Posterior vena cava (tissue), 2 donors: ENCODE measurements at regions of chr5 and their contacts with region 1.

Region 1: DNA sequence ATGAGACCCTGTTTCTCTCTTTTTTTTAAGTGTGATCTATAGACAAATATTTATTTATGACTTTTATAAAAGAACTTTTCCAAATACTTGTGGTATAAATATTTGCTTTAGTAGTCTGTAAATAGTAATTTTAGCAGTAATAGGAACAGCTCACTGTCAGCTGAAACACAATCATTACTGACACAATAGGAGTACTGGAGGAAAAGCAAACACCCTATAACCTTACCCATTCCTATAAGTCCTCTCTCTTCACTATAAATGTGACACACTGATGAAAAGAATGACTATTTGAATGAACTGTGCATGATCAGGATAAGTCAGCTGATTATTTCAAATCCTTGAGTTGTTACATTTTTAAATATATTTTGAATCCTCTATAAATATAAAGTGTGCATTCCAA is 72.4 kb downstream of the CDH12 start:
- DNase-seq: no peak

Region 2: DNA sequence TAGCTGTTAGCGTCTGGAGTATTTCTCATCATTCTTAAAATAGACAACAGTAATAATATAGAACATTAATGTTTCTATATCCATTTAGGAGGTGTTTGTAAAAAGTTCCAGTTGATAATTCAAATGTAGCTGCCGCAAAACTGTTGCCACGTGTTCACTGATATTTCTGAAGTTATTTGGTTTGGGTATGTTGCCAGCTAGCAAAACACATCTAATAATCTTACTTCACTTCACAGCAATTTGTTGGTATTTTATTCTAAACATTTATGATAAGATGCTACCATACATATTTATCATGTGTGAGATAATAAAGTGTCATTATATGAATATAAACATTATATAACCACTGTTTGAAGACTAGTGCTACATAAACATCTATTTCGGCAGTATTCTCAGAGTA is 29.2 kb before region 1 on chr5:
- intact Hi-C with region 1: no loop called
- DNase-seq: no peak

Region 3: DNA sequence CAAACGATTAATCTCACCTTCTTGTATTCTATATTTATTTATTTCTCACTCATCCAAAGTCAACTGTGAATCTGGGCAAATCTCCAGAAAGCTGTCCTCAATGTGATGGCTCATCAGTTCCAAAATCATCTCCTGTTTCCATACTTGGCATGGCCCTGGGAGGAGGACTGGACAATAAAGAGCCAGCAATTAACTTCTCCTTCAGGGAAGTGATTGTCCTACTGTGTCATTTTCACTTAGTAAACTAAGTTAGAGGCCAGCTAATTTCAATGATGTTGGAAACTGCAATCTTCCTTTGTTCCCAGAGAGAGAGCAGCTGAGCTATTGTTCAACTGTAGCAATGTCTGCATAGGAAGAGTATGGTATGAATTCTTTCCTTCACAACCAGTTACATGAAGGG is 54.9 kb after region 1 on chr5:
- intact Hi-C with region 1: loop called in 1 of 2 experiments (anchors 2 kb)
- DNase-seq: no peak